CD8-positive, alpha-beta memory T cell (primary cell): ENCODE measurements at regions of chr5 and their contacts with region 1.

Region 1: DNA sequence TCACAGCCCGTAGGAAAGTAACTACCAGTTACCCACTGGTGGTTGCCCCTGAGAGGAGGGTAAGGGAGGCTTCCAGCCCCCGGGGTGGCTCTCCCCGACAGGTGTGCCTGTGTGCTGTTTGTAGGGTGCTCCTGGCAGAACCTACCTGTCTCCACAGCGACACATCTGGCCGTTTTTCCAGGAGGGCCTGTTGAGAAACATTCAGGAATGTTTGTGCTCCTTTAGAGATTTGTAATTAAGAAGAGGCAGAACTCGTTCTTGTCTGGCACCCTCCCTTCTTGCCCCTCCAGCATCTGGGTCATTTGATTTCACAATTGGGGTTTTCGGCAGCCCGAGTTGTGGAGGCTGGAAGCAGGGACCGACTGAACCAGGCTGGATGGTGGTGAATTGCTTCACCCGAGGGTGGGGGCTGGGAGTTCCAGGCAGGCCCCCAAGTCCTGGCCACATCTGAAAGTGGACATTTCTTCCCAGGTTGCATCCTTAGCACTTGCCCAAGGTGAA is 74.2 kb downstream of the WWC1 start:
- DNase-seq: no peak
- H3K4me3 ChIP-seq: no peak overlapping the region
- H3K4me3 Mint-ChIP-seq: no peak overlapping the region
- H3K27ac ChIP-seq: no peak overlapping the region
- H3K27ac Mint-ChIP-seq: no peak overlapping the region
- H3K4me1 ChIP-seq: no peaks in the 10 kb centered on the region
- H3K4me1 Mint-ChIP-seq: no peaks in the 10 kb centered on the region
- H3K27me3 ChIP-seq: no peaks in the 10 kb centered on the region
- H3K27me3 Mint-ChIP-seq: peaks cover 8 to 14% of the 10 kb centered on the region in 2 donors

Region 2: GRCh38 chr5:168408560-168409305 is 43.1 kb after region 1 on chr5:
- CTCF ChIA-PET with region 1: no interaction called
- POLR2A ChIA-PET with region 1: interaction called, 17 read pairs
- DNase-seq: no peak
- H3K4me3 ChIP-seq: no peak overlapping the region
- H3K4me3 Mint-ChIP-seq: peak overlapping the region in 6 of 7 donors; percentile 66 to 88 (median 84)
- H3K27ac ChIP-seq: no peak overlapping the region
- H3K27ac Mint-ChIP-seq: peak overlapping the region in 5 of 8 donors; percentile 61 to 91 (median 82)
- H3K4me1 ChIP-seq: peaks cover 16% of the 10 kb centered on the region
- H3K4me1 Mint-ChIP-seq: peaks cover 19 to 22% (median 19%) of the 10 kb centered on the region in 3 donors
- H3K27me3 ChIP-seq: no peaks in the 10 kb centered on the region
- H3K27me3 Mint-ChIP-seq: peaks cover 3 to 4% of the 10 kb centered on the region in 2 donors

Region 3: GRCh38 chr5:168592014-168592418 is 226.4 kb after region 1 on chr5:
- CTCF ChIA-PET with region 1: no interaction called
- POLR2A ChIA-PET with region 1: no interaction called
- DNase-seq: no peak
- H3K4me3 ChIP-seq: no peak overlapping the region
- H3K4me3 Mint-ChIP-seq: no peak overlapping the region
- H3K27ac ChIP-seq: no peak overlapping the region
- H3K27ac Mint-ChIP-seq: no peak overlapping the region
- H3K4me1 ChIP-seq: no peaks in the 10 kb centered on the region
- H3K4me1 Mint-ChIP-seq: no peaks in the 10 kb centered on the region
- H3K27me3 ChIP-seq: no peaks in the 10 kb centered on the region
- H3K27me3 Mint-ChIP-seq: peaks cover 12 to 62% of the 10 kb centered on the region in 2 donors